ENCODE measurements at regions of chr12 and their contacts with region 1.

Region 1: DNA sequence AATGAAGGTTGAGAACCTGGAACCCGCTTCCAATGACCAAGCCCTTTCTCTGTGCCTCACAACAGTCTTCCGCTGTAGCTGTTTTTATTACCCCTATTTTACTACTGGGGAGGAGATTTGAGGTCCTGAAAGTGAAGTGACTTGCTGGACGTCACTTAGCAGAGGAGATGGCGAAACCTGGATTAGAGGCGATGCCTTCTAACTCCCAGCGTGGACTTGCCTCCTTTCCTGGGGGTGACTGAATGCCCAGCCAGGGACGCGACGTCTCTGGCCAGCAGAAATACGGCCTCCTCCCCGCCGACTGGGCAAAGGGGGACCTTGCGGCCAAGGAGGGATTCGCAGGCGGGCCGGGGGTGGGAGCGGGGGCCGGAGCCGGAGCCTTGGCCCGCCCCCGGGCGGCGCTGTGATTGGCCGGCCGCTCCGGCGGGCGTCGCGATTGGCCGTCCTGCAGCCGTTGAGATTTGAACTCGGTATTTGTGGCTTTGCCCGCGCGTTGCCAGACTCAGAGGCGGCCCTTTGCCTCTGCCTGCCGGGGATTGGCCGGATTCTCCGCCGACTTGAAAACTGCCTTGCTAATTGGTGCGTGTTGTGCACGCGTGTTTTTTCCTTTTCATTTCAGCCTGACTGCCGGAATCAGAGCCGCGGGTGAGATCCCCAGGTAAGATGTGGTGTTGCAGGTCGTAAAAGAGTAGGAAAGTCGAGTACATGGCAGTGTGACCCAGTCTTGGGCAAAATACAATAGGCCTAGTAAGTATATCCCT is at the start of gene NCAPD2:
- DNase-seq: peak; percentile 55
- H3K4me3 ChIP-seq: peak within 1 kb of the TSS; percentile 97
- CTCF ChIP-seq: peak; percentile 24

Region 2: DNA sequence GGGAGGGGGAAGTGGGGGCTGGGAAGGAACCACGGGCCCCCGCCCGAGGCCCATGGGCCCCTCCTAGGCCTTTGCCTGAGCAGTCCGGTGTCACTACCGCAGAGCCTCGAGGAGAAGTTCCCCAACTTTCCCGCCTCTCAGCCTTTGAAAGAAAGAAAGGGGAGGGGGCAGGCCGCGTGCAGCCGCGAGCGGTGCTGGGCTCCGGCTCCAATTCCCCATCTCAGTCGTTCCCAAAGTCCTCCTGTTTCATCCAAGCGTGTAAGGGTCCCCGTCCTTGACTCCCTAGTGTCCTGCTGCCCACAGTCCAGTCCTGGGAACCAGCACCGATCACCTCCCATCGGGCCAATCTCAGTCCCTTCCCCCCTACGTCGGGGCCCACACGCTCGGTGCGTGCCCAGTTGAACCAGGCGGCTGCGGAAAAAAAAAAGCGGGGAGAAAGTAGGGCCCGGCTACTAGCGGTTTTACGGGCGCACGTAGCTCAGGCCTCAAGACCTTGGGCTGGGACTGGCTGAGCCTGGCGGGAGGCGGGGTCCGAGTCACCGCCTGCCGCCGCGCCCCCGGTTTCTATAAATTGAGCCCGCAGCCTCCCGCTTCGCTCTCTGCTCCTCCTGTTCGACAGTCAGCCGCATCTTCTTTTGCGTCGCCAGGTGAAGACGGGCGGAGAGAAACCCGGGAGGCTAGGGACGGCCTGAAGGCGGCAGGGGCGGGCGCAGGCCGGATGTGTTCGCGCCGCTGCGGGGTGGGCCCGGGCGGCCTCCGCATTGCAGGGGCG is 40.4 kb after region 1 on chr12 and contains the start of gene GAPDH:
- CTCF ChIA-PET with region 1: interaction called, 4 read pairs
- POLR2A ChIA-PET with region 1: interaction called, 25 read pairs
- DNase-seq: peak; percentile 86
- H3K4me3 ChIP-seq: peak within 1 kb of the TSS; percentile 97
- CTCF ChIP-seq: no peak

Region 3: DNA sequence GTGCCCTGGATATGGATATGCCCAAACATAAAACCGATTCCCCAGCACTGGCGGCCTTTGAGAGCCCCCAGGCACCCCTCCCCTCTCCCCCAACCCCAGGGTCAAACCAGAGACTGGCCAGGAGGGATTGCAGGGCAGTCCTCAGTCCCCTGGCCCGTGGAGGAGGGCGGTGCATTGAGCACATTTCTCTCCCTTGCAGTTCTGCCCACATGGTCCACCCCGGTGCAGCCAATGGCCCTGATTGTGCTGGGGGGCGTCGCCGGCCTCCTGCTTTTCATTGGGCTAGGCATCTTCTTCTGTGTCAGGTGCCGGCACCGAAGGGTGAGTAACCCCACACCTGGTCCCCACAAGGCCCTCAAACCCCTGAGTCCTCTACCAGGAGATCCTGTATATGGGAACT is 324.5 kb after region 1 on chr12:
- CTCF ChIA-PET with region 1: no interaction called
- POLR2A ChIA-PET with region 1: no interaction called
- DNase-seq: no peak
- H3K4me3 ChIP-seq: no peak overlapping the region
- CTCF ChIP-seq: no peak

Measured in AG04449 (cell line).